Right ventricle myocardium inferior (tissue), 1 donor: ENCODE measurements at regions of chr1 and their contacts with region 1.

Region 1: DNA sequence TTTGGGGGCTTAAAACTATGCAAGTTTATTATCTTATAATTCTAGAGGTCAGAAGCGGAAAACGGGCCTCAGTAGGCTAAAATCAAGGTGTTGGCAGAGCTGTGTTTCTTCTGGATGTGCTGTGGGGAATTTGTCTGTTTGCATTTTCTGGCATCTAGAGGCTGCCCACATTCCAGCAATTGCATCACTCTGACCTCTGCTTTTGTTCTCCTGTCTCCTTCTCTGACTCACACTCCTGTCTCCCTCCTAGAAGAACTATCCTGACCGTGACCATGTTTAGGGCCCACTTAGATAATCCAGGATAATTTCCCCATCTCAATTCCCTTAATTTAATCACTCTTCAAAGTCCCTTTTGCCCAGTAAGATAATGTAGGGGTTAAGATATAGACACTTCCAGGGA is 127.4 kb upstream of the DEPDC1 start:
- DNase-seq: no peak
- ATAC-seq: peak; percentile 82

Region 2: GRCh38 chr1:68339471-68339870 is 284.8 kb before region 1 on chr1:
- intact Hi-C with region 1: no loop called
- DNase-seq: no peak
- ATAC-seq: peak; percentile 26

Region 3: GRCh38 chr1:68565923-68566322 is 58.3 kb before region 1 on chr1:
- intact Hi-C with region 1: no loop called
- DNase-seq: no peak
- ATAC-seq: no peak

Region 4: DNA sequence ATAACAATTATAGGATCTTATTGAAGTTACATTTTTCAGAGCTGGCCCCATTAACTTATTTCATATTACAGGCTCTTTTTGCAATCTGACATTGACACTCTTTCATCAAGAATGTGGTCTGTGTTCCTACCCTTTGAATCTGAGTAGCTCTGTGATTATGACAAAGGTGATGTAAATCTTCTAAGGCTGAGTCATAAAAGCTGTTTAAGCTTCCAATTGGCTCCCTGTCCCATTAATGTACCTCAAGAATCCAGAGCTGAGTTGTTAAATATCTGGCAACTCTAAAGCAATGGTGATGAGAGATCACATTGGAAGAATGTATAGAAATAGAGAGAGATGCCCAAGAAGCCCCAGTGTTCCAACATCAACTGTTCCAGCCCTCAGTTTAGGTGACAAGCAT is 51.1 kb after region 1 on chr1:
- intact Hi-C with region 1: no loop called
- DNase-seq: no peak
- ATAC-seq: no peak

Region 5: DNA sequence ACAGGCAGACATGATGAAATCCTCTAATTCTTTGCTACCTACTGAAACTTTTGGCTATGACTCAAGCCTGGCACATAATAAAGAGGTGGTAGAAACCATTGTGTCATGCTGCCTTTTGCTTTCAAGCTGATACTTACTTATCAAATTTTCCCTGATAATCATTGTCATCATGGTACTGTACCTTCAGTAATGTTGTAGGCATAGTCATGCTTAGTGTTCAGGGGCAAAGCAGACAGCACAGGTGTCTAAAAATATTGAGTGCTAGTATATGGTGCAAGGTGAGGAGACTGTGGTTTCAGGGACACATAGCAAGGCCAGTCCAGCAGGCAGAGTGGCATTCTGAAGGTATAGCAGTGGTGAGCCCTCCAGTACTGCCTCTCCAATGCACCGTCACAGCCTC is 99.6 kb after region 1 on chr1:
- intact Hi-C with region 1: loop called (anchors 5 kb)
- DNase-seq: no peak
- ATAC-seq: peak; percentile 24

Region 6: DNA sequence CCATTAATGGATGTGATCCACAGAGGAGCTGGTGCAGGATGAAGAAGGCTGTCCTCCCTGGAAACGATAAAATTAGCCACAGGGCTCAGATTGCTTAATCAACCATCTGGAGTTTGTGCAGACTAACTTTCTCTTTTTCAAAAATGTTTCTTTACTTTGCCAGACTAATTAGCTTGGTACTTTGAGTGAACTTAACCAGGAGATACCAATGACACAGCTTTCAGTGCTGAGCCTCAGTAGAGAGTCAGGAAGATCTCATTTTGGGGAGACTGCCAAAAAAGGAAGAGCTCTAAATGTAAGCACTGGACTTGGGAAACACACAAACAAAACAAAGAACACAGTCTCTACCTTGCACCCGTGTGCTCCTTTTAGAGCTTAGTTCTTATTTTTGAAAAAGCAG is 120.8 kb after region 1 on chr1:
- intact Hi-C with region 1: no loop called
- DNase-seq: no peak
- ATAC-seq: no peak